Endothelial cell of umbilical vein (primary cell): ENCODE measurements at regions of chr12 and their contacts with region 1.

Region 1: GRCh38 chr12:96386794-96387193 is 13.4 kb downstream of the CDK17 start:
- DNase-seq: no peak
- H3K4me3 ChIP-seq: no peak overlapping the region
- H3K27ac ChIP-seq: no peak overlapping the region
- H3K4me1 ChIP-seq: peaks cover 59% of the 10 kb centered on the region
- H3K27me3 ChIP-seq: no peaks in the 10 kb centered on the region
- CTCF ChIP-seq: no peak
- POLR2A ChIP-seq: no peak

Region 2: GRCh38 chr12:96225044-96225855 is 161.5 kb before region 1 on chr12:
- CTCF ChIA-PET with region 1: no interaction called
- POLR2A ChIA-PET with region 1: interaction called, 11 read pairs
- dilution Hi-C with region 1: no loop called
- intact Hi-C with region 1: no loop called
- DNase-seq: peak; percentile 93
- H3K4me3 ChIP-seq: no peak overlapping the region
- H3K27ac ChIP-seq: peak overlapping the region; percentile 60
- H3K4me1 ChIP-seq: peaks cover 54% of the 10 kb centered on the region
- H3K27me3 ChIP-seq: no peaks in the 10 kb centered on the region
- CTCF ChIP-seq: no peak
- POLR2A ChIP-seq: no peak